Posterior vena cava (tissue), 2 donors: ENCODE measurements at regions of chr1 and their contacts with region 1.

Region 1: GRCh38 chr1:166933633-166934032 is 41.7 kb downstream of the ILDR2 start:
- DNase-seq: no peak

Region 2: DNA sequence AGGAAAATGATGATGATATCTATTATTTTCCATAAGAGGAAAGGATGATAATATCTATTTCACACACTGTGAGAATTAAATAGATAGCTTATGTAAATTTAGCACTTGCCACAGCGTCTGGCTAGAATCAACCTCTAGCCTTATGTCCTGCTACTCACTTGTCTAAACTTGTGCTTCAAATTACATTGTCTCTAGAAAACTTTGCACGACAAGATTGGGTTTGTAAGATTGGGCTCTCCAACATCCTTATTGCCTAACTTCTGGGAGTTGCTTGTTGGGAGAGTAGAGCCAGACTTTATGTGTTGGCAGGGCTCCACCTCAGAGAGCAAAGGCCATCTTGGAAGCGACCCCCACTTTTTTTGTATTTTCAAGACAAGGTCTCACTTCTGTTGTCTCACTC is 144.4 kb before region 1 on chr1:
- intact Hi-C with region 1: loop called in 1 of 2 experiments (anchors 1 kb)
- DNase-seq: no peak